ENCODE measurements at regions of chr19 and their contacts with region 1.

Region 1: DNA sequence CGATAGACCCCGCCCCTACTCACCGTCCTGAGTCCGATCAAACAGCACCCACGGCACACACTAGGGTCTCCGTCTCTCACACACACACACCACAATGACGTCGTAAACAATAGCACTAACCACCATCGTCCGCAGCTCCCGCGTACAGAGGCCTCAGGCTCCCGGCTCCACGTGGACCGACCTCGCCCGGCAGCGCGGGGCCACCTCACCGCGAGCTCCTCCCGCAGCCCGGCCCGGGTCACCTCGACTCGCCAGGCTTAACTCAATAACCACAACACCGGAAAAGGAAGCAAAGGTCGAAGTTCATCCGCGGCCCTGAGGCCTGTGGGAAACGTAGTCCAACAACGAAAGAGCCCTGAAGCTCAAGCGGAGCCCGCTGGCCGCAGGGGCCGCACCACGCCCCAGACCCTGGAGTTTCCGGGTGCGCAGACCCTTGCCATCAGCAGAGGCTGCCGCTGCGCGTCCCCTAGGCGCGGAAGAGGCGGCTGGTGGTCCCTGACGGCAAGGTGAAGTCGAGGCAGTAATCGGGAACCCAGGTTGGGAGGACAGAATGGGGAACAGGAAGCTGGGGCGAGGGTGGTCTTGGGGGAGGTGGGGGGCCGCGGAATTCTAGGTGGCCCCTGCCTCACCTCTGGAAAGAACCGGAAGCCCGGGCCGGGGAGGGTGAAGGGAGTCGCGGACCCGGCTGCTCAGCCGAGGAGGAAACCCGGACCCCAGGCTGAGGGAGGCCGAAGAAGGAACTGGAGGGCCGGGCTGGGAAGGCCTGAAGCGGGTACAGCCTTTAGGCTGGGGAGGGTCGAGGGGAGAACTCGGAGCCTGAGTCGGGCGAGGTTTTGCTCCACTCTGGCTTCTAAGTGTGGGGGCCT is at the start of gene ZNF529:
- DNase-seq: peak; percentile 95
- ATAC-seq: peak; percentile 96
- H3K4me3 ChIP-seq: peak within 1 kb of the TSS; percentile 67 to 91 (median 77)
- H3K27ac ChIP-seq: peak within 1 kb of the TSS; percentile 78
- H3K4me1 ChIP-seq: peaks cover 20% of the 10 kb centered on the region
- H3K27me3 ChIP-seq: no peaks in the 10 kb centered on the region; a peak in 1 of 5 replicates
- CTCF ChIP-seq: 0 out of 2 replicates have a peak, but pooled peaks have one; percentile 17
- EP300 ChIP-seq: no peak
- POLR2A ChIP-seq: peak; percentile 89 to 93
- RAD21 ChIP-seq: peak; percentile 50
- total RNA-seq, gene ZNF529: 9.3 and 14.2 TPM in 2 replicates

Region 2: GRCh38 chr19:36449059-36449670 is 124.1 kb before region 1 on chr19:
- CTCF ChIA-PET with region 1: no interaction called
- POLR2A ChIA-PET with region 1: no interaction called
- in situ Hi-C with region 1: no loop called
- intact Hi-C with region 1: loop called (anchors 5 kb)
- DNase-seq: no peak
- ATAC-seq: no peak
- H3K4me3 ChIP-seq: no peak overlapping the region
- H3K27ac ChIP-seq: no peak overlapping the region
- H3K4me1 ChIP-seq: no peaks in the 10 kb centered on the region
- H3K27me3 ChIP-seq: no peaks in the 10 kb centered on the region
- CTCF ChIP-seq: no peak
- EP300 ChIP-seq: no peak
- POLR2A ChIP-seq: no peak
- RAD21 ChIP-seq: no peak

Region 3: GRCh38 chr19:36605101-36605876 is 32.0 kb after region 1 on chr19 and contains the start of gene ZNF382:
- CTCF ChIA-PET with region 1: no interaction called
- POLR2A ChIA-PET with region 1: interaction called, 17 read pairs
- in situ Hi-C with region 1: no loop called
- intact Hi-C with region 1: loop called (anchors 2 kb)
- DNase-seq: peak; percentile 63
- ATAC-seq: peak; percentile 94
- H3K4me3 ChIP-seq: peak within 1 kb of the TSS; percentile 87 to 94 (median 93)
- H3K27ac ChIP-seq: peak within 1 kb of the TSS; percentile 68
- H3K4me1 ChIP-seq: peaks cover 18% of the 10 kb centered on the region
- H3K27me3 ChIP-seq: no peaks in the 10 kb centered on the region; a peak in 1 of 5 replicates
- CTCF ChIP-seq: no peak
- EP300 ChIP-seq: no peak
- POLR2A ChIP-seq: peak; percentile 60 to 90
- RAD21 ChIP-seq: 0 out of 2 replicates have a peak, but pooled peaks have one; percentile 13
- total RNA-seq, gene ZNF382: 6.3 and 6.8 TPM in 2 replicates

Region 4: DNA sequence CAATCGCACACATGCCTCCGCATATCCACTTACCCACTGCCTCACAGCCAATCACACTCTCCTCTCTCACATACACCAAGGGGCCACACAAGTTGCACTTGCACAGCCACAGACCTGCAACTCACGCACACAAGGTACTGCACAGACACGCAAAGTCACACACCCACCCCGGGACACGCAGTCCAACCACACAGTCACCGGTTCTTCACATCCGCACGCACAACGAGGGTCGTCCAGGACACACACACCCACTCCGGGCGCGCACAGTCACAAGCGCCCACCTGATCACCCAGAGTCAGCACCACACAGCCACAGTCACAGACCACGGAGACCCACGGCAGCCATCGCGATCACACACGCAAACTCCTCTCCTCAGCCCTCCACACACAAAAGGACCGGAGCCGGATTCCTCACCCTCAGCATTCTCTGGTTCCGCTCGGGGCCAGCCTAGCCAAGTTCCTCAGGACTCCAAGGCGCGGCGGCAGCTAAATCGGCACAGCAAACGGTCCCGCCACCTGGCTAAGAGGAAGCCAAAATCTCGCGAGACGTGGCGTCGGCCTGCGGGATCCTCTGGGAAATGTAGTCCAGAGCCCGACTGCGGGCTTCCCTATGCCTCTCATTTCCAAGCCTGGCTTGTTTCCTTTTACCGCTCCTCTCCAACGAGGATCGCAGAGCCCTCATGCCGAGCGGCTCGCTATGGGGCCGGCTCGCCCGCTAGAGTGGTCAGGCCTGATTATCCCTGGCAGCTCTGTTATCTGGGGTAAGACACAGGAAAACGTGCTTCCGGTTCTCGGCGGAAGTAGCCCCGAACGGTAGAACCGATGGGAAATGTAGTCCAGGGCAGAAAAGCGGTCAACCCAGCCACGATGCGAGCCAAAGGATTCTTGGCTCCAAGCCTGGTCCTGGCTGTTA is 199.3 kb after region 1 on chr19 and contains the start of gene ZNF850:
- CTCF ChIA-PET with region 1: no interaction called
- POLR2A ChIA-PET with region 1: no interaction called
- in situ Hi-C with region 1: no loop called
- intact Hi-C with region 1: loop called (anchors 2 kb)
- DNase-seq: peak; percentile 87
- ATAC-seq: peak; percentile 95
- H3K4me3 ChIP-seq: peak within 1 kb of the TSS; percentile 73 to 93 (median 78)
- H3K27ac ChIP-seq: peak within 1 kb of the TSS; percentile 79
- H3K4me1 ChIP-seq: 0 out of 2 replicates have a peak, but pooled peaks cover 5% of the 10 kb centered on the region
- H3K27me3 ChIP-seq: no peaks in the 10 kb centered on the region; a peak in 1 of 5 replicates
- CTCF ChIP-seq: no peak
- EP300 ChIP-seq: no peak
- POLR2A ChIP-seq: peak; percentile 49 to 65
- RAD21 ChIP-seq: no peak
- total RNA-seq, gene ZNF850: 6.6 and 11.4 TPM in 2 replicates

Region 5: GRCh38 chr19:36850559-36851442 is 277.5 kb after region 1 on chr19 and contains the start of gene ZNF345:
- CTCF ChIA-PET with region 1: no interaction called
- POLR2A ChIA-PET with region 1: interaction called, 14 read pairs
- in situ Hi-C with region 1: no loop called
- intact Hi-C with region 1: no loop called
- DNase-seq: peak; percentile 95
- ATAC-seq: peak; percentile 94
- H3K4me3 ChIP-seq: peak within 1 kb of the TSS; percentile 88 to 98 (median 96)
- H3K27ac ChIP-seq: peak within 1 kb of the TSS; percentile 67
- H3K4me1 ChIP-seq: peaks cover 12% of the 10 kb centered on the region
- H3K27me3 ChIP-seq: peaks cover 0 to 4% of the 10 kb centered on the region in 2 experiments; a peak in 1 of 5 replicates
- CTCF ChIP-seq: no peak
- EP300 ChIP-seq: no peak
- POLR2A ChIP-seq: peak; percentile 76 to 77; a peak in 3 of 4 replicates
- RAD21 ChIP-seq: no peak
- total RNA-seq, gene ZNF345: 2.9 and 3.0 TPM in 2 replicates